ENCODE measurements at regions of chr7 and their contacts with region 1.

Region 1: DNA sequence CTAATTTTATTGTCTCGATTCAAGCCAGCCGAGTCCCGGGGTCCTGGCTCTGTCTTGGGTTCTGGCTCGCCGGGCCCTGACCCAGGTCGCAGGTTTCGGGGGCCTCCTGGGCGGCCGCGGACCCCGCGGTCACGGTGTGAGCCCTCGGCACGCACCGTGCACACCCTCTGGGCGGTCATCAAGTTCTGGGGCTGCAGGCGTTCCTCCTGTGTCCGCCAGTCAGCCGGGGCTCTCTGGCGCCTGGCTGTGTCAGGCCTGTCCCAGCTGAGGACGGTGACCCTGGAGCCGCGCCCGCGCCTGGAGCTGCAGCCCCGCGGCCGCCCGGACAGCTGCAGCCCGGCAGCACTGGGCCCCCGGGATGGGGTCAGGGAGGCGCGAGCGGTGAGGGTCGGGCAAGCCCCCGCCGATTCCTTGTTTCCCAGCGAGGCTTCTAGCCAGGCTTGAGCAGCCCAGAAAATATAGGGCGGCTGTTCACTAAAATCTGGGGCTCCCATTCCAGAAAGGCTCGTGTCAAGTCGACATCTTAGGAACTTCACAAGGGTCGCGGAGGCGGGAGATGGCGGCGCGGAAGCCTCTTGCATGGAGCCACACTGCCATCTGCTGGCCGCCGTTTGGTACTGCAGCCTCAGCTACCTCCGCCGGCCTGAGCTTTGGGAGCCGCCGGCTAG is 4.2 kb upstream of the HOXA7 start:
- DNase-seq: peak; percentile 86
- H3K4me3 ChIP-seq: peak overlapping the region; percentile 48
- CTCF ChIP-seq: peak; percentile 94

Region 2: GRCh38 chr7:26398756-26399501 is 761.8 kb before region 1 on chr7:
- in situ Hi-C with region 1: loop called (anchors 25 kb)
- DNase-seq: peak; percentile 33
- H3K4me3 ChIP-seq: peak overlapping the region; percentile 49
- CTCF ChIP-seq: peak; percentile 32

Region 3: GRCh38 chr7:27689591-27690164 is 529.0 kb after region 1 on chr7:
- in situ Hi-C with region 1: no loop called
- DNase-seq: no peak
- H3K4me3 ChIP-seq: no peak overlapping the region
- CTCF ChIP-seq: peak; percentile 34